Esophagus muscularis mucosa (tissue), 4 donors: ENCODE measurements at regions of chr1 and their contacts with region 1.

Region 1: DNA sequence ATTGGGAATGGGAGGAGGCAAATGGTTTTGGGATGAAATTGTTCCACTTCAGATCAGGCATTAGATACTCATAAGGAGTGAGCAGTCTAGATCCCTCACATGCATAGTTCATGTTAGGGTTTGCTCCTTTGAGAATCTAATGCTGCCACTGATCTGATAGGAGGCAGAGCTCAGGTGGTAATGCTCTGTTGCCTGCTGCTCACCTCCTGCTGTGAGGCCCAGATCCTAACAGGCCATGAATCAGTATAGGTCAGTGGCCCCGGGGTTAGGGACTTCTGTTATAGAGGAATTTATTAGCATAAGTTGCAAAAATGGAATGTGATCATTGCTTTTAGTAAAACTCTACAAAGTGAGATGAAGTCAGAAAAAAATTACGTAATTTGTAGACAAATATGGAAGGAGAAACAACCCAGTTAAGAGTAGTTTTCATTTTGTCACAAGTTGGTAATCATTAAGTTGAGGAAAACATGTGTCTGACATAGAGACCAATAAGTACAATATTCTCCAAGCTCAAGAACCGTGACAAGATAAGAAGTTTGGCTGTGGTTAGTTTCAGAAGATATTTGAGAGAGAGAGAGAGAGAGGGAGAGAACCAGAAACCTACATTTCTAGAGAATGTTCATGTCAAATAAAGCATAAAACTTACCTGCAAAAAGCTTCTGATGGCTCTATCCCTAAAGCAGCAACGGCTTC is 689.7 kb upstream of the PRMT6 start:
- DNase-seq: no peak
- H3K4me3 ChIP-seq: no peak overlapping the region
- H3K27ac ChIP-seq: no peak overlapping the region
- H3K4me1 ChIP-seq: no peaks in the 10 kb centered on the region
- H3K27me3 ChIP-seq: no peaks in the 10 kb centered on the region
- CTCF ChIP-seq: no peak
- EP300 ChIP-seq: no peak
- POLR2A ChIP-seq: no peak

Region 2: GRCh38 chr1:107153014-107153413 is 786.2 kb after region 1 on chr1:
- intact Hi-C with region 1: loop called (anchors 5 kb)
- DNase-seq: no peak
- H3K4me3 ChIP-seq: no peak overlapping the region
- H3K27ac ChIP-seq: no peak overlapping the region
- H3K4me1 ChIP-seq: peaks cover 0 to 9% (median 0%) of the 10 kb centered on the region in 4 donors
- H3K27me3 ChIP-seq: no peaks in the 10 kb centered on the region
- CTCF ChIP-seq: no peak
- EP300 ChIP-seq: no peak
- POLR2A ChIP-seq: no peak